Endothelial cell of umbilical vein (primary cell): ENCODE measurements at regions of chr12 and their contacts with region 1.

Region 1: DNA sequence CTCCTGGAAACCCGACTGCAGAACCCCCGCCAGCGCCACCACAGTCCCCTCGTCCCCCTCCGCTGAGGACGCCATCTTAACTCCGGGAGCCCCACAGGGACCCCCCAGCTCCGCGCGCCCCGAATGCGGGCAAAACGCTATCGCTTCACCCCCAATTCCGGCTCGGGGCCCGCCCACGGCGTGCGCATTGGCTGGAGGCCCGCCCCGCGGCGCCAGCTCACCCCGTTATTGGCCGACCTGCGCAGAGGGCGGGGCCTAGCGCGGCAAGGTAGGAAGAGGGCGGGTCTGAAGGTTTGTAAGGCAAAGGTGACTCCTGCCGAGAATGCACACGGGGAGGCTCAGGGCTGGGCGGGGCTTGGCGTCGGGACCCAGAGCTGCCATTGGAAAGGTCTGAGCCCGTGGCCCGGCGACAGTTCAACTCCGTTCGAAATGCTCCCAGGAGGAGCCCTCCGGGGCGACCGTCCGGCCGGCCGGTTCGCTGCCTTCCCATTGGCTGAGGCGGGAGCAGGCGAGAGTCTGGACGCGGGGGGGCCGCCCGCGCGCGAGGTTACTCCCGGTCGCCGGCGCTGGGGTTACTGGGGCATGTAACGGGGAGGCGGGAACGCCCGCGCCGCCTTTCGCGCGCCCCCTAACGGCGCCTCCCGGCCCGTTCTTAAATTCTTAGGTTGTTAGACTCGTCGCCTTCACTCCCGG is at the start of gene LPCAT3:
- DNase-seq: peak; percentile 97
- H3K4me3 ChIP-seq: peak within 1 kb of the TSS; percentile 79 to 98 (median 97)
- H3K27ac ChIP-seq: peak within 1 kb of the TSS; percentile 64
- H3K4me1 ChIP-seq: peaks cover 10% of the 10 kb centered on the region
- H3K27me3 ChIP-seq: no peaks in the 10 kb centered on the region
- CTCF ChIP-seq: peak; percentile 88 to 94
- POLR2A ChIP-seq: peak; percentile 49
- total RNA-seq, gene LPCAT3: 29.3 and 29.5 TPM in 2 replicates

Region 2: DNA sequence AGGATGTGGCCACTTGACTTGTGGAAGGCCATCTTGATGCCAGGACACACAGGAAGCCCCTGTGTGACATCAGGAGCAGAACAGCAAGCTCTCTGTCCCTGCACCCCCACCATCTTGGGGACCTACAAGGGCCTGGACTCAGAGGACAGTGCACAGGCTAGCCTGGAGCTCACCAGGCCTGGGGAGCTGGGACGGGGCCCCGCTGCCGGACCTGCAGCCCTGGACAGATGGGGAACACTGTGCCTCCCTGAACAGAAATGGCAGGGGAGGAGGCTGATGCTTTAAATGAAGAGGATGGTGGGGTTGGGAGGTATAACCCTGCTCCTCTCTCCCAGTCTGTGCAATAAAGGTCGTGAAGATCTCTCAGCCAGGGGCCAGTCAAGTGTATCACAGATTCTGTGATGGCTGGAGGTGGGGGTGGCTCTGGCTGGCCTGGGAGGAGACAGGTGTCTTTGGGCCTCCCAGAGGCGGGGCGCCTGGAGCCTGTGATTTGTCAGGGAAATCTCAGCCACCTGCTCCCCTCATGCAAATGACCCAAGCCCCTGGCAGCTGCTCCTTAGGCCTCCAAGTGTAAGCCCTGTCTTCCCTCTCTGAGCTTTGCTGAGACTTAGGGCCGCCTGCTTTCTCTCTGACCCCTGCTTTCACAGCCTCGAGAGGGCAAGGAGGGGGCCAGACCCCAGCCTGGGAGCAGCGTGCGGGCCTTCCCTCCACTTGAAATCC is 178.9 kb before region 1 on chr12:
- CTCF ChIA-PET with region 1: no interaction called
- POLR2A ChIA-PET with region 1: no interaction called
- dilution Hi-C with region 1: no loop called
- intact Hi-C with region 1: no loop called
- DNase-seq: no peak
- H3K4me3 ChIP-seq: no peak overlapping the region
- H3K27ac ChIP-seq: no peak overlapping the region
- H3K4me1 ChIP-seq: no peaks in the 10 kb centered on the region
- H3K27me3 ChIP-seq: no peaks in the 10 kb centered on the region
- CTCF ChIP-seq: no peak
- POLR2A ChIP-seq: no peak

Region 3: GRCh38 chr12:7042842-7043241 is 24.3 kb after region 1 on chr12:
- CTCF ChIA-PET with region 1: interaction called, 7 read pairs
- POLR2A ChIA-PET with region 1: no interaction called
- dilution Hi-C with region 1: no loop called
- intact Hi-C with region 1: loop called (anchors 2 kb)
- DNase-seq: peak; percentile 43
- H3K4me3 ChIP-seq: no peak overlapping the region
- H3K27ac ChIP-seq: no peak overlapping the region
- H3K4me1 ChIP-seq: peaks cover 6% of the 10 kb centered on the region
- H3K27me3 ChIP-seq: peaks cover 2 to 3% of the 10 kb centered on the region in 2 experiments
- CTCF ChIP-seq: peak; percentile 9 to 24
- POLR2A ChIP-seq: no peak

Region 4: GRCh38 chr12:7092229-7092985 is 73.9 kb after region 1 on chr12 and contains the start of gene C1R:
- CTCF ChIA-PET with region 1: interaction called, 4 read pairs
- POLR2A ChIA-PET with region 1: no interaction called
- dilution Hi-C with region 1: no loop called
- intact Hi-C with region 1: loop called (anchors 1 kb)
- DNase-seq: peak; percentile 67
- H3K4me3 ChIP-seq: peak within 1 kb of the TSS; percentile 51 to 70 (median 64)
- H3K27ac ChIP-seq: no peak within 1 kb of the TSS
- H3K4me1 ChIP-seq: peaks cover 6% of the 10 kb centered on the region
- H3K27me3 ChIP-seq: peaks cover 0 to 16% of the 10 kb centered on the region in 2 experiments
- CTCF ChIP-seq: peak; percentile 85
- POLR2A ChIP-seq: no peak
- total RNA-seq, gene C1R: 3.1 and 3.6 TPM in 2 replicates

Region 5: DNA sequence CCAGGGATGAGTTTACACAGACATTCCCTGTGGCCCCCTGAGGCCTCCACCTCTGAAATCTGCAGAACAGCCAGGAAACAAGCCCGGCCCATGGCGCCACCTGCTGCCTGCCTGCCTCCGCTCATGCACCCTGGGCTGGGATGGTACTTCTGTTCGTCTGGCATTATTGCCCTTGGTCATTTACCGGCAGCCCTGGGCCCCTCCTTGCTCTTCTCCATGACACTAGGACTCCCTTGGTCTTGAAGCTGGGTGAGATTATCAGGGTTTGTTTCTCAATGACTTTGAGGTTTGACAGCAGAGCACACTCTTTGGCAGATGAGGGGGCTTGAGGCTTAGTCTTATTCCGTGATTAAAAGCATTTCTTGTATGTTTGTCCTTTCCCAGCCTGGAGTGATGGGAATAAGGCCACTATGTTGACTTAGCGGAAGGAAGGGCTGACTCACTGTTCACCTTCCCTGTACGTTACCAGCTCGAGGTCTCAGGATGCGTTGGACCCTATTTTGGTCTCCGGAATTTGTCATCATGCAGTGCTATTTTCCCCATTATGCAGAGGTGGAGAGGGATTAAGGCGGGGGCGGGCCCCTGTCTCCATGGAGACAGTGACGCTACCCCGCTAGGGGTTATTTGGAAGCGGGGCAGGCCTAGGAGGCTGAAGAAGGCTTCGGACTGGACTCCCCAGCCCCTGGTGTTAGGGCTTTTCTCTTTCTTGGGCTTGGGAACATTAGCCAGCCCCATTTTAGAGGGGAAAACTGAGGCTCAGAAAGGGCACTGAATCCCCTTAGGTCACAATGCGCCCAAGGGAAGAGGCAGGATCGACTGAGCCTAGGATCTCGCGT is 170.3 kb after region 1 on chr12:
- CTCF ChIA-PET with region 1: no interaction called
- POLR2A ChIA-PET with region 1: no interaction called
- dilution Hi-C with region 1: no loop called
- intact Hi-C with region 1: loop called (anchors 2 kb)
- DNase-seq: peak; percentile 95
- H3K4me3 ChIP-seq: peak overlapping the region in 2 of 3 experiments; percentile 64 to 69
- H3K27ac ChIP-seq: peak overlapping the region; percentile 98
- H3K4me1 ChIP-seq: peaks cover 22% of the 10 kb centered on the region
- H3K27me3 ChIP-seq: no peaks in the 10 kb centered on the region
- CTCF ChIP-seq: peak; percentile 87 to 88
- POLR2A ChIP-seq: no peak